ENCODE measurements at regions of chr3 and their contacts with region 1.

Region 1: GRCh38 chr3:107927361-107928083 is 163.3 kb downstream of the CD47 start:
- DNase-seq: peak; percentile 37 to 83 (median 66)
- ATAC-seq: peak; percentile 90
- H3K4me3 ChIP-seq: peak overlapping the region; percentile 63
- H3K4me3 Mint-ChIP-seq: peak overlapping the region; percentile 89
- H3K27ac ChIP-seq: no peak overlapping the region
- H3K27ac Mint-ChIP-seq: peak overlapping the region; percentile 33
- H3K4me1 ChIP-seq: peaks cover 11% of the 10 kb centered on the region
- H3K4me1 Mint-ChIP-seq: peaks cover 12% of the 10 kb centered on the region
- H3K27me3 ChIP-seq: peaks cover 0 to 3% of the 10 kb centered on the region in 2 experiments
- H3K27me3 Mint-ChIP-seq: peaks cover 4% of the 10 kb centered on the region
- CTCF ChIP-seq: peak; percentile 97

Region 2: DNA sequence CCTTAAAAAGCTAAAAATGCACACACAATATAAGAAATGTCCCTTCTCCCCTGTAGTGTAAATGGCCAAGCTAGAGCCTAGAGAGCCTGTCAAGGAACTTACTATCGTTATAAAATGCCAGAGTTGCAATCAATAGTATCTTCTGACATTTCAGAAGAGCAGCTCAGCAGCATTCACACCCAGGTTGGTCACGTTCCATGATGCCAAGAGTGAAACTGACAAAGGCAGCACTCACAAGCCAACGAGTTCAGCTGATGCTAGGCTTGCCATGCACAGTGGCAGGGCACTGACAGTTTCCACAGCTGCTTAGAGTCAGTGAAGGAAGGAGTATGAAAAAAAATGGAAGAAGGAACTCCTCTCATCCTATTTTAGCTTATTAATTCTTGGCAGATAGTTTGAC is 881.7 kb before region 1 on chr3:
- CTCF ChIA-PET with region 1: no interaction called
- POLR2A ChIA-PET with region 1: no interaction called
- intact Hi-C with region 1: no loop called
- DNase-seq: no peak
- ATAC-seq: no peak
- H3K4me3 ChIP-seq: no peak overlapping the region
- H3K4me3 Mint-ChIP-seq: no peak overlapping the region
- H3K27ac ChIP-seq: no peak overlapping the region
- H3K27ac Mint-ChIP-seq: no peak overlapping the region
- H3K4me1 ChIP-seq: no peaks in the 10 kb centered on the region
- H3K4me1 Mint-ChIP-seq: no peaks in the 10 kb centered on the region
- H3K27me3 ChIP-seq: no peaks in the 10 kb centered on the region
- H3K27me3 Mint-ChIP-seq: no peaks in the 10 kb centered on the region
- CTCF ChIP-seq: no peak

Region 3: DNA sequence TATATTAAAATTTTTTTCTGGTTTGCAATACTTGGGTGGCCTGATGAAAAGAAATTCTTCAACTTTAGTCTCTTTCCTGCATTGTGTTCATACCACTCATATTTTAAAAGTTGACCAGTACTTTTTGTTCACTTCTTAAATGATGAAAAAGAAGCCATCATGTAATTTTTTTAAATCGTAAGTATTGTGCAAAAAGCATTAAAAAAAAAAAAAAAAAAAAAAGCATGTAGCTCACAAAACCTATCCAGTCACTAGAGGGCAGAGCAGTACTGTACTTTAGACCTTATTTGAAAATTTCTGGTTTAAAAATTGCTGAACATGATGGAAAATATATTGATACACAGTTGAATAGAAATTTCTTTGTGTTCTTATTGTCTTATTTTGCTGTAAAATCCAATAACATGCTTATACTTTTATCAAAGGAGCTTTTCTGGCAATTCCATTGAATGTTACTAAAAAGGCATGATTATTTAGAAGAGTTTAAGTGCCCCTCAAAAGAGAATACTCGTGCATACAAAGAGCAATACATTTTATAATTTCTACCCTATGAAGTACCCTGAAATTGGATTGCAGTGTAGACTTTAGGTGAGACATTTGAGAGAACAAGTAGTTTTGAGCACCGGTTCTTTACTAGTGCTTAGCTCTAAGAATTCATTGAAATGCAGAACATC is 267.1 kb before region 1 on chr3:
- CTCF ChIA-PET with region 1: interaction called, 12 read pairs
- POLR2A ChIA-PET with region 1: no interaction called
- intact Hi-C with region 1: loop called in 1 of 2 experiments (anchors 5 kb)
- DNase-seq: peak in 2 of 9 experiments; percentile 52 to 61
- ATAC-seq: no peak
- H3K4me3 ChIP-seq: no peak overlapping the region
- H3K4me3 Mint-ChIP-seq: no peak overlapping the region
- H3K27ac ChIP-seq: no peak overlapping the region
- H3K27ac Mint-ChIP-seq: no peak overlapping the region
- H3K4me1 ChIP-seq: peaks cover 17% of the 10 kb centered on the region
- H3K4me1 Mint-ChIP-seq: peaks cover 31% of the 10 kb centered on the region
- H3K27me3 ChIP-seq: no peaks in the 10 kb centered on the region
- H3K27me3 Mint-ChIP-seq: no peaks in the 10 kb centered on the region
- CTCF ChIP-seq: peak; percentile 73

Region 4: DNA sequence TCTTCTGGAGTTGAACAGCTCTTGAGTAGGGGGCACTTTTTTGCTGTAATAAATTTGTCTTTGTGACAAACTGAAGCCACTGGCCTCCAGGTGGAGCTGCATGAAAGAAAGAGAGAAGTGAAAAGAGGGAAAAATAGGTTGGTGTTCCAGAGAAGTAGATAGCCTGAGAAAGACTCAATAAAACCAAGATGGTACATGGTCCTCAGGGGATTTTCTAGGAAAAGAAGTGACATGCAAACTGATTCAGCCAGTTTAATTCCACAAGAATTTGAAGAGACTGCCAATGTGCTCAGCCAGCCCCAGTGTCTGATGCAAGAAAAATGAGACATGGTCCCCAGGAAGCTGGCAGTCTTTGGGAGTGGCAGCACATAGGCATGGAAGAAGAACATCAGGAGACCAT is 10.6 kb after region 1 on chr3:
- CTCF ChIA-PET with region 1: interaction called, 25 read pairs
- POLR2A ChIA-PET with region 1: interaction called, 3 read pairs
- intact Hi-C with region 1: no loop called
- DNase-seq: peak in 3 of 9 experiments; percentile 5 to 43 (median 30)
- ATAC-seq: no peak
- H3K4me3 ChIP-seq: no peak overlapping the region
- H3K4me3 Mint-ChIP-seq: no peak overlapping the region
- H3K27ac ChIP-seq: no peak overlapping the region
- H3K27ac Mint-ChIP-seq: no peak overlapping the region
- H3K4me1 ChIP-seq: no peaks in the 10 kb centered on the region
- H3K4me1 Mint-ChIP-seq: peaks cover 13% of the 10 kb centered on the region
- H3K27me3 ChIP-seq: no peaks in the 10 kb centered on the region
- H3K27me3 Mint-ChIP-seq: no peaks in the 10 kb centered on the region
- CTCF ChIP-seq: no peak

Region 5: GRCh38 chr3:107978131-107979055 is 50.9 kb after region 1 on chr3:
- CTCF ChIA-PET with region 1: interaction called, 12 read pairs
- POLR2A ChIA-PET with region 1: interaction called, 6 read pairs
- intact Hi-C with region 1: loop called in 1 of 2 experiments (anchors 2 kb)
- DNase-seq: peak in 1 of 9 experiments; percentile 28
- ATAC-seq: peak; percentile 31
- H3K4me3 ChIP-seq: peak overlapping the region in 1 of 2 experiments; percentile 26
- H3K4me3 Mint-ChIP-seq: peak overlapping the region; percentile 48
- H3K27ac ChIP-seq: no peak overlapping the region
- H3K27ac Mint-ChIP-seq: peak overlapping the region; percentile 4
- H3K4me1 ChIP-seq: peaks cover 51% of the 10 kb centered on the region
- H3K4me1 Mint-ChIP-seq: peaks cover 74% of the 10 kb centered on the region
- H3K27me3 ChIP-seq: no peaks in the 10 kb centered on the region
- H3K27me3 Mint-ChIP-seq: no peaks in the 10 kb centered on the region
- CTCF ChIP-seq: no peak

Region 6: GRCh38 chr3:108221911-108222852 is 294.7 kb after region 1 on chr3 and contains the start of gene IFT57:
- CTCF ChIA-PET with region 1: interaction called, 3 read pairs
- POLR2A ChIA-PET with region 1: no interaction called
- intact Hi-C with region 1: loop called (anchors 2 to 10 kb)
- DNase-seq: peak; percentile 89 to 99 (median 95)
- ATAC-seq: peak; percentile 94
- H3K4me3 ChIP-seq: peak within 1 kb of the TSS; percentile 73 to 94
- H3K4me3 Mint-ChIP-seq: peak within 1 kb of the TSS; percentile 97
- H3K27ac ChIP-seq: peak within 1 kb of the TSS; percentile 96 to 97
- H3K27ac Mint-ChIP-seq: peak within 1 kb of the TSS; percentile 98
- H3K4me1 ChIP-seq: peaks cover 41% of the 10 kb centered on the region
- H3K4me1 Mint-ChIP-seq: peaks cover 53% of the 10 kb centered on the region
- H3K27me3 ChIP-seq: no peaks in the 10 kb centered on the region
- H3K27me3 Mint-ChIP-seq: no peaks in the 10 kb centered on the region
- CTCF ChIP-seq: no peak
- total RNA-seq, gene IFT57: 45.2 to 55.7 TPM

Region 7: GRCh38 chr3:108406661-108407206 is 479.2 kb after region 1 on chr3:
- CTCF ChIA-PET with region 1: interaction called, 15 read pairs
- POLR2A ChIA-PET with region 1: no interaction called
- intact Hi-C with region 1: loop called in 1 of 2 experiments (anchors 5 kb)
- DNase-seq: peak in 3 of 9 experiments; percentile 22 to 78 (median 55)
- ATAC-seq: peak; percentile 79
- H3K4me3 ChIP-seq: no peak overlapping the region
- H3K4me3 Mint-ChIP-seq: no peak overlapping the region
- H3K27ac ChIP-seq: no peak overlapping the region
- H3K27ac Mint-ChIP-seq: no peak overlapping the region
- H3K4me1 ChIP-seq: no peaks in the 10 kb centered on the region
- H3K4me1 Mint-ChIP-seq: peaks cover 3% of the 10 kb centered on the region
- H3K27me3 ChIP-seq: no peaks in the 10 kb centered on the region
- H3K27me3 Mint-ChIP-seq: no peaks in the 10 kb centered on the region
- CTCF ChIP-seq: peak; percentile 40

Region 8: DNA sequence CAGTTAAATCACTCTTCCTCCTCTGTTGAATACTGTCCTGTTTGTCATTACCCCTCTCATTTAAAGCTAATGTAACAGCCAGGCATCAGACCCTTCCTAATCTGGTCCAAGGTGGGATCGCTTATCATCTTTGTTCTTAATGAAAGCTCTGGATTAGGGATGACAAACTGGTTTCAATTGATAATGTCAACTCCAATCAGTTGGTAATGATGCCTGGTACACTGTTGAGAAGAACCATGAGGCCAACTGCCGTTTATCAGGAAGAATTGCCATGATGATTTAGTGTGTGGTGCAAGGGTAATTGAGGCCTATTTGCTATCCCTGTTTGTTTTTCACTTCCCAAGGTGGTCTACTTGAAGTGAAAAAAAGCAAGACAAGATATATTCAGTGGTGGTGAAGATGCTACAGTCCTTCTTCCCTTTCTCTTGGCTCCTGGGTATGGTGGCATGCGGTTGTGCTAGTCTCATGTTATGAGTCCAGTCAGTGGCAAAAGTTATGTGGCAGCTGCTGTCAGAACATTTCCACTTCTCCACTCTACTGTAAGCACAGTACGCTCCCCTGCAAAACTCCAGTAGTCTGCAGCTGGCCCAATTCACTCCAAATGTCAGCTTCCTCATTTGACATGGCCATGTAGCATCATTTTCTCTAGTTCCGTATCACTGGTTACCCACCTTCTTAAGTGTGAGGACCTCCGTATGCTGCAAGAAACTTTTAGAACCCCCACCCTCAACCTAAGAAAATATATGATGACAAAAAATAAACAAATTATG is 1117.9 kb after region 1 on chr3:
- CTCF ChIA-PET with region 1: no interaction called
- POLR2A ChIA-PET with region 1: no interaction called
- intact Hi-C with region 1: no loop called
- DNase-seq: no peak
- ATAC-seq: no peak
- H3K4me3 ChIP-seq: no peak overlapping the region
- H3K4me3 Mint-ChIP-seq: no peak overlapping the region
- H3K27ac ChIP-seq: no peak overlapping the region
- H3K27ac Mint-ChIP-seq: no peak overlapping the region
- H3K4me1 ChIP-seq: no peaks in the 10 kb centered on the region
- H3K4me1 Mint-ChIP-seq: no peaks in the 10 kb centered on the region
- H3K27me3 ChIP-seq: no peaks in the 10 kb centered on the region
- H3K27me3 Mint-ChIP-seq: no peaks in the 10 kb centered on the region
- CTCF ChIP-seq: no peak

Measured in CD8-positive, alpha-beta T cell (primary cell).